ENCODE measurements at regions of chr2 and their contacts with region 1.

Region 1: GRCh38 chr2:11583840-11584524 is 50.1 kb downstream of the GREB1 start:
- DNase-seq: peak; percentile 46
- ATAC-seq: peak; percentile 91
- H3K4me3 ChIP-seq: no peak overlapping the region
- H3K27ac ChIP-seq: no peak overlapping the region
- H3K4me1 ChIP-seq: no peaks in the 10 kb centered on the region
- H3K27me3 ChIP-seq: peaks cover 0 to 2% of the 10 kb centered on the region in 2 experiments; a peak in 1 of 4 replicates
- CTCF ChIP-seq: peak; percentile 90 to 98 (median 92)
- EP300 ChIP-seq: no peak
- POLR2A ChIP-seq: no peak
- RAD21 ChIP-seq: peak; percentile 90

Region 2: GRCh38 chr2:11129598-11130449 is 454.2 kb before region 1 on chr2:
- CTCF ChIA-PET with region 1: interaction called, 122 read pairs
- POLR2A ChIA-PET with region 1: no interaction called
- RAD21 ChIA-PET with region 1: interaction called, 23 read pairs
- SMC1A ChIA-PET with region 1: interaction called, 9 read pairs
- in situ Hi-C with region 1: loop called (anchors 5 kb)
- intact Hi-C with region 1: loop called (anchors 1 kb)
- DNase-seq: no peak
- ATAC-seq: peak; percentile 76
- H3K4me3 ChIP-seq: peak overlapping the region; percentile 54; the same call in 1 of the 2 replicates
- H3K27ac ChIP-seq: no peak overlapping the region
- H3K4me1 ChIP-seq: peaks cover 8% of the 10 kb centered on the region
- H3K27me3 ChIP-seq: no peaks in the 10 kb centered on the region; a peak in 3 of 4 replicates
- CTCF ChIP-seq: peak; percentile 33 to 50 (median 43); a peak in 5 of 6 replicates
- EP300 ChIP-seq: no peak
- POLR2A ChIP-seq: peak; percentile 19; the same call in 1 of the 2 replicates
- RAD21 ChIP-seq: peak; percentile 53

Region 3: DNA sequence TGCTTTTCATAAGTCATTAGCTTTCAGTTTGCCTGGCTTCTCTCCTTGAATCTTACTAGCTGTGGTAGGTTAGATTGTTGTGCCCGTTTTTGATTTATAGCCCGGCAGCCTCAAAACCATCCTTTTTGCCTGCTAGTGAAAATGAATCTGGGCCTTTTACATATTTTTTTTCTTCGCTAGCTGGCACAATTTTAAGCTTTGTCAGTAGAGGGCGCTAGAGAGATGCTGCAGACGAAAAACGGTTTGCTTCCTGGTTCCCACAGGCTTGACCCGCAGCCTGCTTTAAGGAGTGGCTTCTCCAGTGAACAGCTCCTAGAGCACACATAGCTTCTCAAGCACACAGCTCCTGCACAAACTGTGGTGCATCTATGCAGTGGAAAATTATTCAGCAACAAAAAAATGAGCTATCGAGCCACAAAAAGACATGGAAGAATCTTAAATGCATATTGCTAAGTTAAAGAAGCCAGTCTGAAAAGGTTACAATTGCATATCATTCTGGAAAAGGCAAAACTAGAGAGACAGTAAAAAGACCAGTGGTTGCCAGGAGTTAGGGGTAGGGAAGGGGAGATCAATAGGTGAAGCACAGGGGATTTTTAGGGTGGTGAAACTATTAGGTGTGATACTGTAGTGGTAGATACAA is 165.9 kb before region 1 on chr2:
- CTCF ChIA-PET with region 1: interaction called, 13 read pairs
- POLR2A ChIA-PET with region 1: no interaction called
- RAD21 ChIA-PET with region 1: no interaction called
- SMC1A ChIA-PET with region 1: interaction called, 3 read pairs
- in situ Hi-C with region 1: no loop called
- intact Hi-C with region 1: loop called (anchors 2 kb)
- DNase-seq: no peak
- ATAC-seq: peak; percentile 27; the same call in 1 of the 3 replicates
- H3K4me3 ChIP-seq: no peak overlapping the region
- H3K27ac ChIP-seq: no peak overlapping the region
- H3K4me1 ChIP-seq: no peaks in the 10 kb centered on the region
- H3K27me3 ChIP-seq: no peaks in the 10 kb centered on the region
- CTCF ChIP-seq: peak; percentile 21 to 50 (median 49); a peak in 5 of 6 replicates
- EP300 ChIP-seq: no peak
- POLR2A ChIP-seq: no peak
- RAD21 ChIP-seq: peak; percentile 22; the same call in 1 of the 2 replicates

Region 4: GRCh38 chr2:11477994-11478393 is 106.0 kb before region 1 on chr2:
- CTCF ChIA-PET with region 1: interaction called, 206 read pairs
- POLR2A ChIA-PET with region 1: interaction called, 3 read pairs
- RAD21 ChIA-PET with region 1: interaction called, 55 read pairs
- SMC1A ChIA-PET with region 1: interaction called, 44 read pairs
- in situ Hi-C with region 1: loop called (anchors 5 kb)
- intact Hi-C with region 1: loop called (anchors 1 kb)
- DNase-seq: no peak
- ATAC-seq: peak; percentile 88
- H3K4me3 ChIP-seq: no peak overlapping the region
- H3K27ac ChIP-seq: no peak overlapping the region
- H3K4me1 ChIP-seq: no peaks in the 10 kb centered on the region
- H3K27me3 ChIP-seq: peaks cover 5 to 6% of the 10 kb centered on the region in 2 experiments; a peak in 3 of 4 replicates
- CTCF ChIP-seq: peak; percentile 67 to 83 (median 75)
- EP300 ChIP-seq: no peak
- POLR2A ChIP-seq: no peak
- RAD21 ChIP-seq: peak; percentile 89

Region 5: DNA sequence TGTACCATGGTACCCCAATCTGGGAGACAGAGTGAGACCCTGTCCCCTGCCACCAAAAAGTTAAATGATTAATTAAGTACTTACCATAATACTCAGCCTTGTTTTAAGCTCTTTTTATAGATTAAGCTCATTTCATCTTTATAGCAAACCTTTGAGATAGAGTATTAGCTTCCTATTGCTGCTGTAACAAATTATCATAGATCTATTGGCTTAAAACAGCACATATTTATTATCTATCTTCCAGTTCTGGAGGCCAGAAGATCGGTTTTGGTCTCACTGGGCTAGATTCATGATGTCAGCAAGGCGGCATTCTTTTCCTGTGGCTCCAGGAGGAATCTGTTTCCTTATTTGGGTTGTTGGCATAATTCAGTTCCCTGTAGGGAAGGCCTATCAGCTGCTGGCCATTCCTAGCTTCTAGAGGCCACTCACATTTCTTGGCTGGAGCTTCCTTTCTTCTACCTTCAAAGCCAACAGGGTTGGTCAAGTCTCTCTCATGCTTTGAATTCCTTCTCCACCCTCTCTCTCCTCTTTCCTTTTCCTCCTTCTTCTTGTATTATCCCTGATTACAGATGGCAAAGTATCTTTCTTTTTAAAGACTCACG is 63.8 kb before region 1 on chr2:
- CTCF ChIA-PET with region 1: no interaction called
- POLR2A ChIA-PET with region 1: no interaction called
- RAD21 ChIA-PET with region 1: no interaction called
- SMC1A ChIA-PET with region 1: no interaction called
- in situ Hi-C with region 1: no loop called
- intact Hi-C with region 1: no loop called
- DNase-seq: no peak
- ATAC-seq: no peak
- H3K4me3 ChIP-seq: no peak overlapping the region
- H3K27ac ChIP-seq: no peak overlapping the region
- H3K4me1 ChIP-seq: no peaks in the 10 kb centered on the region
- H3K27me3 ChIP-seq: no peaks in the 10 kb centered on the region; a peak in 1 of 4 replicates
- CTCF ChIP-seq: no peak
- EP300 ChIP-seq: no peak
- POLR2A ChIP-seq: no peak
- RAD21 ChIP-seq: no peak

Region 6: GRCh38 chr2:11562011-11562410 is 22.0 kb before region 1 on chr2:
- CTCF ChIA-PET with region 1: interaction called, 35 read pairs
- POLR2A ChIA-PET with region 1: no interaction called
- RAD21 ChIA-PET with region 1: interaction called, 3 read pairs
- SMC1A ChIA-PET with region 1: interaction called, 3 read pairs
- in situ Hi-C with region 1: no loop called
- intact Hi-C with region 1: no loop called
- DNase-seq: no peak
- ATAC-seq: no peak
- H3K4me3 ChIP-seq: no peak overlapping the region
- H3K27ac ChIP-seq: no peak overlapping the region
- H3K4me1 ChIP-seq: no peaks in the 10 kb centered on the region
- H3K27me3 ChIP-seq: 0 out of 4 replicates have a peak, but pooled peaks cover 0 to 3% of the 10 kb centered on the region in 2 experiments
- CTCF ChIP-seq: no peak
- EP300 ChIP-seq: no peak
- POLR2A ChIP-seq: no peak
- RAD21 ChIP-seq: no peak

Region 7: GRCh38 chr2:11835403-11835802 is 251.4 kb after region 1 on chr2:
- CTCF ChIA-PET with region 1: no interaction called
- POLR2A ChIA-PET with region 1: no interaction called
- RAD21 ChIA-PET with region 1: no interaction called
- SMC1A ChIA-PET with region 1: no interaction called
- in situ Hi-C with region 1: no loop called
- intact Hi-C with region 1: no loop called
- DNase-seq: no peak
- ATAC-seq: no peak
- H3K4me3 ChIP-seq: no peak overlapping the region
- H3K27ac ChIP-seq: no peak overlapping the region
- H3K4me1 ChIP-seq: peaks cover 8% of the 10 kb centered on the region; the same call in 1 of the 2 replicates
- H3K27me3 ChIP-seq: 0 out of 4 replicates have a peak, but pooled peaks cover 0 to 4% of the 10 kb centered on the region in 2 experiments
- CTCF ChIP-seq: peak in 1 of 3 experiments; percentile 8; a peak in 2 of 6 replicates
- EP300 ChIP-seq: no peak
- POLR2A ChIP-seq: no peak
- RAD21 ChIP-seq: no peak

Measured in GM12878 (cell line).